OCI-LY7 (cell line): ENCODE measurements at regions of chr20 and their contacts with region 1.

Region 1: DNA sequence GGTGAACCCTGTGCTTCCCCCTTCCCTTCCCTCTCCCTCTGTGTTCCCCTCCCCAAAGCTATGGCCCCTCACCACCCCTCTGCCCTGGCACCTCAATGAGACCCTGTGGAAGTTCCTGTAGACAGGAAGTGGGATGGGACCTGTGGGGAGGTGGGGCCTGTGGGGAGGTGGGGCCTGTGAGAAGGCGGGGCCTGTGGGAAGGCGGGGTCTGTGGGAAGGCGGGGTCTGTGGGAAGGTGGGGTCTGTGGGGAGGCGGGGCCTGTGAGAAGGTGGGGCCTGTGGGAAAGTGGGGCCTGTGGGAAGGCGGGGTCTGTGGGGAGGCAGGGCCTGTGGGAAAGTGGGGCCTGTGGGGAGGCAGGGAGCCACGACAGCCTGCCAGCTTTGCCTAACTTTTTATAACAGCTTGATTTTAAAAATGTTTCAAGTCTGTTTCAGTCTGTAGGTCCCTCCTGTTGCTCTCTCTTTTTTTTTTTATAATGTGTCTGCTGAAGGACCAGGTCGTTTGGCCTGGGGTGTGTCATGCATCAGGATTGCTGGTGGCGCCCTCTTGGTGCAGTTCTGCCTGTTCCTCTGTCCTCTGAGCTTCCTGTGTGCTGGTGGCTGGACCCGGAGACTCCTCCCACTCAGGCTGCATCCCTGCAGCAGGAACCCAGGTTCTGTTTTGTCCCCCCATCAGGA is 70.5 kb upstream of the SLCO4A1 start:
- DNase-seq: peak; percentile 80
- H3K4me3 ChIP-seq: peak overlapping the region; percentile 10
- H3K27ac ChIP-seq: no peak overlapping the region
- H3K4me1 ChIP-seq: peaks cover 18% of the 10 kb centered on the region
- CTCF ChIP-seq: peak; percentile 82

Region 2: DNA sequence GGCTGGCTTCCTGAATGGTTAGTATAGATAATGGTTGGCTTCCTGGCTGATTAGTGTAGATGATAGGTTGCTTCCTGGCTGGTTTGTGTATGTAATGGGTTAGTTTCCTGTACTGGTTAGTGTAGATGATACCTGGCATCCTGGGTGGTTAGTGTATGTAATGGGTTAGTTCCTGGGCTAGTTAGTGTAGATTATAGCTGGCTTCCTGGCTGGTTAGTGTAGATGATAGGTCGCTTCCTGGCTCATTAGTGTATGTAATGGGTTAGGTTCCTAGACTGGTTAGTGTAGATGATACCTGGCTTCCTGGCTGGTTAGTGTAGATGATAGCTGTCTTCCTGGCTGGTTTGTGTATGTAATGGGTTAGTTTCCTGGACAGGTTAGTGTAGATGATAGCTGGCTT is 706.5 kb before region 1 on chr20:
- CTCF ChIA-PET with region 1: interaction called, 11 read pairs
- POLR2A ChIA-PET with region 1: no interaction called
- intact Hi-C with region 1: no loop called
- DNase-seq: no peak
- H3K4me3 ChIP-seq: no peak overlapping the region
- H3K27ac ChIP-seq: no peak overlapping the region
- H3K4me1 ChIP-seq: no peaks in the 10 kb centered on the region
- CTCF ChIP-seq: no peak

Region 3: DNA sequence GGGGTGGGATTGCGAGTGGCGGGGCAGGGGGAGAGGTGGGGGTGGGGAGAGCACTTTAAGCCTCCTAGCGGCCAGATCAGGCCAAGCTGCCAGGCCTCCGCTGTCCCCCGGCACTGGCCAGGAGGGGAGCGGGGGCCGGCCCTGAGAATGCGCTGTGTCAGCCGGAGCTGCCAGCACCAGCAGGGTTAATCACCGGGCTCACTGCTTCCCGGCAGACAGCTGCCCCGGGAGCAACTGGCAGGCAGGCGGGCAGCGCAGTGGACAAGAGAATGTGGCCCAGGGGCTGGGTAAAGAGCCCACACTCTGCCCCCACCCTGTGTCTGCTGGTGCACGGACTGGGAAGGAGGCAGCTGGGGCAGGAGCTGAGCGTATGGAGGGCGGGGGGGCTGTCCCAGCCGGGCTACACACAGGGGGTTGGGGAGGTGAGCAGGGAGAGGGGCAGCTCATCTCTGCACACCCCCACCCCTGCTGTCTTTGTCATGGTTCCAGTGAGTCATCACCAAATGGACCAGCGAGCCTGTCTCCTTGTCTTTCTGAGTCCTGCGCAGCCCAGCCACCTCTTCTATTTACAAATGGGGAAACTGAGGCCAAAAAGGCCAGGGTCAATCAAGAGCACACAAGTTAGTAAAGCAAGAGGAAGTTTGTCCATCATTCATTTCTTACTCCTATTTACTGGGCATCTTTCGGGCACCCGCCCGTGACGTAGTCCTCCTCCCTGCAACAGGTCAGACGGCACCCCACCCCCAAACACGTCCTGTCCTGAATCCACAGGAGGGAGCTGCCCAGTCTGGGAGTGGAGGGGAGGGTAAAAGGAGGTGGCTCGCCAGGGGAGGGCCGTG is 202.6 kb before region 1 on chr20:
- CTCF ChIA-PET with region 1: no interaction called
- POLR2A ChIA-PET with region 1: no interaction called
- intact Hi-C with region 1: no loop called
- DNase-seq: no peak
- H3K4me3 ChIP-seq: no peak overlapping the region
- H3K27ac ChIP-seq: no peak overlapping the region
- H3K4me1 ChIP-seq: peaks cover 39% of the 10 kb centered on the region
- CTCF ChIP-seq: peak; percentile 42

Region 4: DNA sequence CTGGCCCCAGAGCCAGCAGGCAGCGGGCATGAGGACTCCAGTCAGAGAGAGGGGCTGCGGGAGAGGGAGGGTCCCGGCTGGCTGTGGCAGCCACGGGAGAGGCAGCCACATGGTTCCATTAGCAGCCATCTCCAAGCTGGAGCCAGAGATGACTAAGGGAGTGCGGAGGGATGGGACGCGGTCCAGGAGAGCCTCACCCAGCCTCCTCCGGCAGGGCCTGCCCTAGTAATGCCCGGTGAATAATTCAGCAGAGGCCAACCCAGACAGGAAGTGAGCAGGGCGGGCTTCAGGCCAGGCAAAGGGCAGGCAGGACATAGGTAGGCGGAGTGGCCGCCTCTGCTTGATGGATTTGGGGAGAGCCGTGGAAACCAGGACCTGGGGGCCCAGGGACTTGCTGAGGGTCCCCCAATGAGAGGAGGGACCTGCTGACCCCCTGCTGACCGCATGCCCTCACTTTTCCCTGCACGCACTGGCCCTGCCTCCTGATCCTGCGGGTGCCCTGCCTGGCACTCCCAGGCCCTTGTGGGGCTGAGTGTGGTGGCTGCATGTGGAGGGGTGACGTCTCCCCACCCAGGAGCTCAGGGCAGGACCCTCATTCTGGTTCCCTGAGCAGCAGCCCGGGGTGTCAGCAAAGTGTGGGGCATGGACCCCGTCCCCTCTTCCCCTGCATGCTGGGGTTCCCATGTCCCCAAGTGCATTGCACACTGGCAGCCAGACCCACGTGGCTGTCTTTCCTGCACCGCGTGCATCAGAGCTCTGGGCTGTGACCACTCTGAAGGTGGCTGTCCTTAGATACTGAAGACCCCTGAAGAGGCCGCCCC is 18.7 kb after region 1 on chr20:
- CTCF ChIA-PET with region 1: no interaction called
- POLR2A ChIA-PET with region 1: no interaction called
- intact Hi-C with region 1: no loop called
- DNase-seq: no peak
- H3K4me3 ChIP-seq: no peak overlapping the region
- H3K27ac ChIP-seq: no peak overlapping the region
- H3K4me1 ChIP-seq: no peaks in the 10 kb centered on the region
- CTCF ChIP-seq: no peak

Region 5: GRCh38 chr20:62616728-62617621 is 45.2 kb after region 1 on chr20:
- CTCF ChIA-PET with region 1: interaction called, 3 read pairs
- POLR2A ChIA-PET with region 1: no interaction called
- intact Hi-C with region 1: loop called (anchors 5 kb)
- DNase-seq: peak; percentile 82
- H3K4me3 ChIP-seq: no peak overlapping the region
- H3K27ac ChIP-seq: no peak overlapping the region
- H3K4me1 ChIP-seq: peaks cover 31% of the 10 kb centered on the region
- CTCF ChIP-seq: peak; percentile 98